Right cardiac atrium (tissue), 5 donors: ENCODE measurements at regions of chr16 and their contacts with region 1.

Region 1: DNA sequence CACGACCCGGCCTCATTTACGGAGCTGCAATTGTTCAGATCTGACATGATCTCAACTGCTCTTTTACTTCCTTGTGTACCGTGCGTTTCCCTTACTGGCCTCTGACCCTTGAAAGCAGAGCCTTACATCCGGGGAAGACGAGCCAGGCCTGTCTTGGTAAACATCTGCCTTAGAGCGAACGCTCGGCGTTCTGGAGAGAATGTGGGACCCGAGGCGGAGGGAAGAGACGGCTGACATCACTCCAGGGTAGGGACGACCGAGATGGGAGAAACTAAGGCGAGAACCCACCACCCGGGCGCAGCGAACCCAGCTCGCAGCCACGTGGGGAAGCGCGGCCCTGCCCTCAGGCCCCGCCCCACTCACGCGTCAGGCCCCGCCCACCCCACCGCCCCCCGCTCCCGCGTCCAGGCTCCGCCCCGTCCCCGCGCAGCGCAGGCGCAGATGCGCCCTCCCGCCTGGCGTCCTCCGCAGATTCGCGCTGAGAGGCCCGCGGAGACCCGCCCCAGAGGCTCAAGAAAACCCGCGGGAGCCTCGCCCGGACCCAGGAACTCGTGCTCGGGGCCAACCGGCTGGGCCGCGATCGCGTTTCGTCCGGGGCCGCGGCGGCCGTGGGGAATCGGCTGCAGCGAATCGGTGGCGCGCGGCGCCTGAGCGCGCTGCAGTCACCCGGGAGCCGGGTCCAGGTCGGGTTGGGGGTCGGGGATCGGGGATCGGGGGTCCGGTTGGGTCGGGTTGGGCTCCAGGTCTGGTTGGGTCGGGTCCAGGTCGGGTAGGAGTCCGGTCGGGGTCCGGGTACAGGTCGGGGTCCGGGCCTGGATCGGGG is at the start of gene TELO2:
- DNase-seq: peak; percentile 83 to 94 (median 93)
- ATAC-seq: peak; percentile 91 to 93
- H3K4me3 ChIP-seq: peak within 1 kb of the TSS; percentile 86
- H3K27ac ChIP-seq: peak within 1 kb of the TSS; percentile 83
- H3K4me1 ChIP-seq: peaks cover 4% of the 10 kb centered on the region
- H3K27me3 ChIP-seq: no peaks in the 10 kb centered on the region
- total RNA-seq, gene TELO2: 21.2 to 29.2 (median 23.2) TPM

Region 2: DNA sequence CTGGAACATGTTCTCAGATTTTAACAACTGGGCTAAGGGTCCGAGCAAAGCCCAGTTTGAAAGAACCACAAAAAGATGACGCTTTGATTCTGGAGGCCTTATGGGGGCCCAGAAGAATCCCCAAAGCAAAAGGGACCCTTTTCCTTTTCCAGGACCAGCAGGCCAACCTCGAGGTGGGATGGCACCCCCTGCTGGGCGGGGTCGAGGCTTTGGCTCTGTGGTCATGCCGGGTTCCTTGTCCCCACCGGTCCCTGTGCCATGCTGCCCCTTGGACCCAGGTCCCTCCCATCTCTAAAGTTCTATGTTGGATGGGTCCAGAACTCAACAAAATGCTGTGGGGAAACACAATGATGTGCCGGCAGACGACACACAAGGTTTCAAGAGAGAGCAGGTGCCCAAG is 71.2 kb after region 1 on chr16:
- intact Hi-C with region 1: loop called in 1 of 4 experiments (anchors 10 kb)
- DNase-seq: peak in 1 of 3 donors; percentile 63
- ATAC-seq: no peak
- H3K4me3 ChIP-seq: no peak overlapping the region
- H3K27ac ChIP-seq: no peak overlapping the region
- H3K4me1 ChIP-seq: no peaks in the 10 kb centered on the region
- H3K27me3 ChIP-seq: no peaks in the 10 kb centered on the region

Region 3: GRCh38 chr16:1610276-1611017 is 117.3 kb after region 1 on chr16:
- intact Hi-C with region 1: loop called in 1 of 4 experiments (anchors 5 kb)
- DNase-seq: peak; percentile 89 to 96 (median 96)
- ATAC-seq: peak; percentile 78 to 82
- H3K4me3 ChIP-seq: peak overlapping the region; percentile 72
- H3K27ac ChIP-seq: peak overlapping the region; percentile 55
- H3K4me1 ChIP-seq: no peaks in the 10 kb centered on the region
- H3K27me3 ChIP-seq: no peaks in the 10 kb centered on the region